ENCODE measurements at regions of chrX and their contacts with region 1.

Region 1: GRCh38 chrX:119606280-119607015 is at the start of gene NKRF:
- DNase-seq: peak; percentile 97
- H3K4me3 ChIP-seq: peak within 1 kb of the TSS; percentile 71 to 75 (median 74)
- H3K27ac ChIP-seq: peak within 1 kb of the TSS; percentile 82 to 94 (median 87)
- H3K4me1 ChIP-seq: peaks cover 0 to 5% (median 0%) of the 10 kb centered on the region in 4 donors
- H3K27me3 ChIP-seq: no peaks in the 10 kb centered on the region
- CTCF ChIP-seq: no peak
- EP300 ChIP-seq: no peak
- POLR2A ChIP-seq: peak; percentile 83
- total RNA-seq, gene NKRF: 4.8 to 6.1 (median 5.0) TPM

Region 2: GRCh38 chrX:119211649-119212014 is 394.8 kb before region 1 on chrX:
- intact Hi-C with region 1: no loop called
- DNase-seq: no peak
- H3K4me3 ChIP-seq: no peak overlapping the region
- H3K27ac ChIP-seq: no peak overlapping the region
- H3K4me1 ChIP-seq: no peaks in the 10 kb centered on the region
- H3K27me3 ChIP-seq: no peaks in the 10 kb centered on the region
- CTCF ChIP-seq: no peak
- EP300 ChIP-seq: no peak
- POLR2A ChIP-seq: no peak

Region 3: GRCh38 chrX:119574394-119575266 is 31.8 kb before region 1 on chrX and contains the start of gene UBE2A:
- intact Hi-C with region 1: loop called (anchors 2 kb)
- DNase-seq: peak; percentile 96
- H3K4me3 ChIP-seq: peak within 1 kb of the TSS; percentile 58 to 71 (median 68)
- H3K27ac ChIP-seq: peak within 1 kb of the TSS; percentile 89 to 96 (median 92)
- H3K4me1 ChIP-seq: peaks cover 0 to 15% (median 10%) of the 10 kb centered on the region in 4 donors
- H3K27me3 ChIP-seq: no peaks in the 10 kb centered on the region
- CTCF ChIP-seq: peak in 2 of 4 experiments; percentile 12 to 47
- EP300 ChIP-seq: no peak
- POLR2A ChIP-seq: peak; percentile 56 to 79
- total RNA-seq, gene UBE2A: 26.7 to 51.7 (median 43.1) TPM

Region 4: GRCh38 chrX:119655125-119655524 is 48.7 kb after region 1 on chrX:
- intact Hi-C with region 1: loop called (anchors 5 kb)
- DNase-seq: no peak
- H3K4me3 ChIP-seq: no peak overlapping the region
- H3K27ac ChIP-seq: peak overlapping the region in 3 of 4 donors; percentile 63 to 67 (median 66)
- H3K4me1 ChIP-seq: peaks cover 0 to 13% (median 5%) of the 10 kb centered on the region in 4 donors
- H3K27me3 ChIP-seq: no peaks in the 10 kb centered on the region
- CTCF ChIP-seq: no peak
- EP300 ChIP-seq: no peak
- POLR2A ChIP-seq: no peak

Region 5: DNA sequence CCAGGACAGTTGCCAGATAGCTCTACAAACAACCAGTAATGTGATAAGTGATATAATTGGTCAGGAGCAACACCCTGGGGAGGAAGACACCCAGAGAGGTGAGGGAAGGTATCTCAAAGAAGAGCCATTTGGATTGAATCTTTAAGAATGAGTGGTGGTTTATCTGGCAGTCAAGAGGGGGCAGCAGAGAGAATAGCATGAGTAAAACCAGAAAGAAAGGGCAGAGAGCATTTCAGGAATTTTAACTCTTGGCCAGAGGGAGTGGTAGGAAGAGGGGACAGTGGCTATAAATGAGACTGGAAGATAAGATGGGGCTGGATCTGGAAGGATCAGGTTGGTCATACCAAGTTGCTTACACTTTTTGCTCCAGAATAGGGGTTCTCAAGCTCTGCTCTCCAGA is 92.4 kb after region 1 on chrX:
- intact Hi-C with region 1: loop called (anchors 5 kb)
- DNase-seq: no peak
- H3K4me3 ChIP-seq: no peak overlapping the region
- H3K27ac ChIP-seq: no peak overlapping the region
- H3K4me1 ChIP-seq: peaks cover 0 to 7% (median 2%) of the 10 kb centered on the region in 4 donors
- H3K27me3 ChIP-seq: no peaks in the 10 kb centered on the region
- CTCF ChIP-seq: peak in 3 of 4 experiments; percentile 37 to 46 (median 42)
- EP300 ChIP-seq: no peak
- POLR2A ChIP-seq: no peak

Region 6: DNA sequence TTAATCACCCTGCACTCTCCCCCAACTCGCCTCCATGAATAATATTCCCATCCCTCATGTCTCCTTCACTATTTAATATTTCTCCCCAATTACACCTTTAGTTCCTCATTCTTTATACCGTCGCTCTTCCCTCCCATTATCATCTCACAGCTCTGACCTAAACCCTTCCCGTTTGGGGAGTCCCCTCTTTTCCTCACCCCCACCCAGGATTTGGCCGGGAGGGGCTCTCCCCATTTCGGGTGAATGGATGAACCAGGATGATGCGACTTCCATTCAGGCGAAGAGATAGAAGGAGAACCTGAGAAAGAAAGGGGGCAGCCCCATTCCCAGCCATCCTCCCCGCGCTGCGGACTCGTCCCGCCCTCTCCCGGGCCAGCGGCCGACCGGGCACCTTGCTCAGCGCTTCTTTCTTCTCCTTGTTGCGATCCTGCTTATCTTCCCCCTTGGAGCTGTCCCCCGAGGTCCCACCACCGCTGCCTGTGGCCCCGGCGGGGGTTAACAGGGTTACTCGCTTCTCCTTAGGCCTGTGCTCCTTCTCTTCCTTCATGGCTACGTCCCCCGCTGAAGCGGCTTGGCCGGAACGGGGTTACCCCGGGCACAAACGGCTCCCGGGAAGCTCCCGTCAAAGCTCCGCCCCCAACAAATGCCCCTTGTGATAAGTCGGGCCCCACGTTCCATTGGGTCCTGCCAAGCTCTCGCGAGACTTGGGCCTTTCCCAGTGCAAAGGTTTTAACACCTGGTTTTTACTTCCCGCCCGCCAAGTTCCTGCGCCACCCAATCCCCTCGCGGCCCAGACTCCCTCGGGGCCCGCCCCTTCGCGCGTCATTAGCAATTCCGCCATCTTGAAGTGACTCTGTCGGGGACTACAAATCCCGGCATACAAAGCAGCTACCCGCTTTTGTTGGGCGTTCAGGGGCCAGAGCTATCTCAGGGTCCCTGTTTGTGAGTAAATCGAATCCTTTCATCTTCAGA is 246.2 kb after region 1 on chrX and contains the start of gene UPF3B:
- intact Hi-C with region 1: loop called (anchors 10 kb)
- DNase-seq: peak; percentile 99
- H3K4me3 ChIP-seq: peak within 1 kb of the TSS; percentile 54 to 69 (median 64)
- H3K27ac ChIP-seq: peak within 1 kb of the TSS; percentile 86 to 92 (median 86)
- H3K4me1 ChIP-seq: peaks cover 0 to 7% (median 5%) of the 10 kb centered on the region in 4 donors
- H3K27me3 ChIP-seq: no peaks in the 10 kb centered on the region
- CTCF ChIP-seq: no peak
- EP300 ChIP-seq: no peak
- POLR2A ChIP-seq: peak; percentile 33 to 42
- total RNA-seq, gene UPF3B: 6.5 to 11.4 (median 9.2) TPM

Measured in sigmoid colon (tissue), 7 donors.